ENCODE measurements at regions of chr15 and their contacts with region 1.

Region 1: DNA sequence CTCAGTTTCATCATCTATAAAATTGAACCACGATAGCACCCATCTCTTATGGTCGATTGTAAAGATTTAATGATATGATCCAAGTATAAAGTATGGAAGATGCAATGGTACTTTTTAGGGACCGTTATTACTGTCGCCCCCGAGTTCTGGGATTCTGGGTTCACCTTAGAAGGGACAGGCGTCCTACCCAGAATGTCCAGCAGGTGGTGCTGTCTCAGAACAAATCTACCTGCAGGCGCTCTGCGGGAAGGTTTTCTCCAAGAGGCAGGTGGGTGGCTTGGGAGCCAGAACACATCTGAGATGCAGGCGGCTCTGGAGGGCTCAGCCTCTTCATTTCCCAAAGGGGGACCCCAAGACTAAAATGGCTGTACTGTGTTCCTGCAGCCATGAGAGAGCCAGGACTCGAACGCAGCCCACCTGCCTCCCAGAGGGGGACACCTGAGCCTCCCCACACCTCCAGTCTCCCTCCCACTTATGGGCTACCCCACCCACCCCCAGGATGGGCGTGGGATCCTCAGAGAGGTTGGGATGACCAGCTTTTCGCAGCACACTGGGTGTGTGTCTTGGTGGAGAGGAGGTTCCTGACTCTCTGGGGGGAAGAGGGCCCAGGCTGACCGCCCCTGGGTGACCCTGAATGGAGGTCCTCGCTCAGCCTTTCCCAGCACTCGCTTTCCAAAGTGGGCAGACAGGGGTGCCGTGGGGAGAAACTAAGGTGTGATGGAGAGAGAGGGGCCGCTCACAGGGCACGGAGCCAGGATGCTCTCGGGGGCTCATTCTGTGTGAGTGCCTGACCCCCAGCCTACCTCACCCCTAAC is 28.1 kb upstream of the CORO2B start:
- DNase-seq: peak; percentile 37
- H3K4me3 ChIP-seq: no peak overlapping the region
- H3K27ac ChIP-seq: no peak overlapping the region
- H3K4me1 ChIP-seq: no peaks in the 10 kb centered on the region
- H3K27me3 ChIP-seq: no peaks in the 10 kb centered on the region
- CTCF ChIP-seq: peak; percentile 82 to 89

Region 2: DNA sequence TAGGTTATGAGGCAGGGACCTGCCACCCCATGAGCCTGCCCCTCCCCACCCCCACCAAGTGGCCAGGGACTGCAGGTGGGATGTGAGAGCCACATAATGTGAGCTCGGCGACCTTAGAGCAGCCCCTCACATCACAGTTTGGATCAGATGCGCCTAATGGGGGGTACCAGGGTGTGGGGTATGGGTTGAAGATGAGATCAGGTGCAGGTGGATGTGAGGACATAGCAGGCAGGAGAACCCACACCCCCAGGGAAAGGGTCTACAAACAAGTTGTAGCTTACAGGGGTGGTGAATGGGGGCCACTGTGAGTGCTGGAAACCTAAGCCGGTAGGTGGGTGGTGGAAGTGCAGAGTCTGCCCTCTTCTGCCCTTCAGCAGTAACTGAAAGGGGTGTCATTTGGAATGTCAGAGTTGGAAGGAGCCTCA is 122.1 kb after region 1 on chr15:
- CTCF ChIA-PET with region 1: interaction called, 5 read pairs
- dilution Hi-C with region 1: no loop called
- in situ Hi-C with region 1: loop called in 1 of 2 experiments (anchors 5 kb)
- intact Hi-C with region 1: loop called (anchors 1 kb)
- DNase-seq: no peak
- H3K4me3 ChIP-seq: no peak overlapping the region
- H3K27ac ChIP-seq: no peak overlapping the region
- H3K4me1 ChIP-seq: peaks cover 14% of the 10 kb centered on the region
- H3K27me3 ChIP-seq: no peaks in the 10 kb centered on the region
- CTCF ChIP-seq: peak; percentile 22 to 36

Region 3: DNA sequence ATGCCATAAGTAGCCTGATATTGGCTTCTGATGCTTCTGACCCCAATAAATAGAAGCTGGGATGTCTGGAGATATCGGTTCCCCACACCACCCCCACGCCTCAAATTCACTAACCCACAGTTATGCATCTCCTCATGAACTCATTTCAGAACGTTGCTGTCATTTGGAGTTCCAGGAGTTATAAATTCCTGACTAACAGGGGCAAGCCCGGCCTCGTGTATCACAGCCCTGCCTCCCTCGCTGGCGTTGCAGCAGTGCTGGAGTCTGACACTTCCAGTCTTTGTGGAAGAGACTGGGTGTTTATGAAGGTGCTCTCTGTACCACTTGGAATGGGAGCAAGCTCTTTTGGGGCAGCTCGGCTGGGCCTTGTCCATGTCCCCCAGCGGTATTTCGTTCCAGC is 169.0 kb after region 1 on chr15:
- CTCF ChIA-PET with region 1: no interaction called
- dilution Hi-C with region 1: no loop called
- in situ Hi-C with region 1: no loop called
- intact Hi-C with region 1: no loop called
- DNase-seq: peak; percentile 31
- H3K4me3 ChIP-seq: no peak overlapping the region
- H3K27ac ChIP-seq: no peak overlapping the region
- H3K4me1 ChIP-seq: no peaks in the 10 kb centered on the region
- H3K27me3 ChIP-seq: peaks cover 2% of the 10 kb centered on the region
- CTCF ChIP-seq: no peak

Region 4: GRCh38 chr15:68730471-68730919 is 179.8 kb after region 1 on chr15:
- CTCF ChIA-PET with region 1: no interaction called
- dilution Hi-C with region 1: no loop called
- in situ Hi-C with region 1: no loop called
- intact Hi-C with region 1: loop called (anchors 2 kb)
- DNase-seq: peak; percentile 21
- H3K4me3 ChIP-seq: no peak overlapping the region
- H3K27ac ChIP-seq: no peak overlapping the region
- H3K4me1 ChIP-seq: no peaks in the 10 kb centered on the region
- H3K27me3 ChIP-seq: no peaks in the 10 kb centered on the region
- CTCF ChIP-seq: peak in 1 of 2 donors; percentile 72

Region 5: DNA sequence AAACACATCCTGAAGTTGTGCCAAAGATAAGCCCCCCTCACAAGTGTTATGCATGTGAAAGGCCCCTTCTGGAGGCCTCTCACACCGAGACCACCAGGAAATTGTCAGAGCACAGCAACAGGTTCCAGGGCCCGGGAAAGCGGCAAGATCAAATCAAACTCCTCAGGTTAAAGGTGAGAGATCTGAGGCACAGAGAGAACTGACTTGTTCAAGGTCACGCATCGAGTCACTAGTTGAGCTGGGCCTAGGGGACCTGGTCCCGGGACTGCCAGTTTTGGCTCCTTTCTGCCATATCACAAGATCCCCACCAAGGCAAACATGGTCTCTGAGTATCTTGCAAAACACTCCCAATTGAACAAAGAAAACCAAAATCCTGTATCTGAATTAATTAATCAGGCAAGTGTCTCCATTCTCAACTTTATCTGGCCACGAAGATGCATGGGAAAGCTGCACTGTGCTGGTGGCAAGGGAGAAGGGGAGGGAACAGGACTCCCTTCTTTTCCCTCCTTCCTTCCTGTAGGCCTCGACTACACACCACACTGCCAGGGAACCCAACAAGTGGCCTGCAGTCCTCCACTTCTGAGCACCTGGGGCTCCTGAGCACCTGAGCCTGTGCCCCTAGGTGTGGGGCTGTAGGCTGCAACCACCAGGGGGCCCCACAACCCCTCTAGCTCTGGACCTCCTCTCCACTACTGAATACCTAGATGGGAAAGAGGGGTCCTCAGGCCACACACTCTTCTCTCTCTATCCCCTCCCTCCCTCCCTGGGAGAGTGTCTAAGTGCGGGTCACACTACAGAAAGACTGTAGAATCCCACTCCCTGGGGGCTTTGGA is 232.8 kb after region 1 on chr15:
- CTCF ChIA-PET with region 1: no interaction called
- dilution Hi-C with region 1: no loop called
- in situ Hi-C with region 1: no loop called
- intact Hi-C with region 1: loop called (anchors 2 kb)
- DNase-seq: peak; percentile 27
- H3K4me3 ChIP-seq: no peak overlapping the region
- H3K27ac ChIP-seq: no peak overlapping the region
- H3K4me1 ChIP-seq: peaks cover 19% of the 10 kb centered on the region
- H3K27me3 ChIP-seq: no peaks in the 10 kb centered on the region
- CTCF ChIP-seq: peak; percentile 56 to 81

Region 6: GRCh38 chr15:68829068-68829467 is 278.4 kb after region 1 on chr15:
- CTCF ChIA-PET with region 1: no interaction called
- dilution Hi-C with region 1: no loop called
- in situ Hi-C with region 1: no loop called
- intact Hi-C with region 1: loop called (anchors 5 kb)
- DNase-seq: peak; percentile 6
- H3K4me3 ChIP-seq: no peak overlapping the region
- H3K27ac ChIP-seq: no peak overlapping the region
- H3K4me1 ChIP-seq: no peaks in the 10 kb centered on the region
- H3K27me3 ChIP-seq: peaks cover 3% of the 10 kb centered on the region
- CTCF ChIP-seq: peak; percentile 12 to 65

Region 7: DNA sequence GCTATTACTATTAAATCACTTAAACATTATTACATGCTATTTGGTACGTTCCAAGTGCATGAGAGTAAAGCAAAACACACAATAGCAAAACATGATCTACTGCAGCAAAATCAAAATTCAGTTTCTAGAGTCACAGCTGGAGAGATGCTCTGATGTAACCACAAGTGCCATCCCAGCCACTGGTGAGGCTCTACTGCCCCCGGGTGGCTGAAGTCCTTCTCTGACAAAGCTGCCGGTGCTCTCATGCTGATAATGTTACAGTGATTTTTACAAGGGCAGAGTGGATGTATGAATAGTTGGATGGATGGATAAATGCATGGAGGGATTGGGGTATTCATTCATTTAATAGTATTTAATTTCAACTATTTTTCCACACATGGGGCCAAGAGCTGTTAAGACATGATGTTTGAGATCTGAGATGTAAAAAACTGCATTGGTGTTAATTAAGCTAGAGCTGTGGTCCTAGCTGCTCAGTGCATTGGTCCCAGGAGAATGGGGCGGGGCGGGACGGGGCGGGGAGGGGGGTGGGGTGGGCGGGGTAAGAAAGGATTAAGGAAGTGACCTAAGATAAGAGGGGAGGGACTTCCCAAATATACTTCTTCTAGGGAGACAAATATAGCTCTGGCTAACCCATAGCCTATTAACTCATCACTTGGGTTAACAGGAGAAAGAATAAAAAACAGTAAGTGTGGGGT is 374.3 kb after region 1 on chr15:
- CTCF ChIA-PET with region 1: interaction called, 4 read pairs
- dilution Hi-C with region 1: no loop called
- in situ Hi-C with region 1: no loop called
- intact Hi-C with region 1: loop called (anchors 1 kb)
- DNase-seq: peak; percentile 68
- H3K4me3 ChIP-seq: no peak overlapping the region
- H3K27ac ChIP-seq: no peak overlapping the region
- H3K4me1 ChIP-seq: no peaks in the 10 kb centered on the region
- H3K27me3 ChIP-seq: no peaks in the 10 kb centered on the region
- CTCF ChIP-seq: peak; percentile 92 to 97

Measured in mammary epithelial cell (primary cell).